Vagina (tissue), 2 donors: ENCODE measurements at regions of chr3 and their contacts with region 1.

Region 1: GRCh38 chr3:190574473-190574872 is 60.6 kb downstream of the IL1RAP start:
- DNase-seq: no peak
- H3K4me3 ChIP-seq: no peak overlapping the region
- H3K27ac ChIP-seq: no peak overlapping the region
- H3K4me1 ChIP-seq: peaks cover 9% of the 10 kb centered on the region
- H3K27me3 ChIP-seq: no peaks in the 10 kb centered on the region
- CTCF ChIP-seq: no peak
- POLR2A ChIP-seq: no peak

Region 2: DNA sequence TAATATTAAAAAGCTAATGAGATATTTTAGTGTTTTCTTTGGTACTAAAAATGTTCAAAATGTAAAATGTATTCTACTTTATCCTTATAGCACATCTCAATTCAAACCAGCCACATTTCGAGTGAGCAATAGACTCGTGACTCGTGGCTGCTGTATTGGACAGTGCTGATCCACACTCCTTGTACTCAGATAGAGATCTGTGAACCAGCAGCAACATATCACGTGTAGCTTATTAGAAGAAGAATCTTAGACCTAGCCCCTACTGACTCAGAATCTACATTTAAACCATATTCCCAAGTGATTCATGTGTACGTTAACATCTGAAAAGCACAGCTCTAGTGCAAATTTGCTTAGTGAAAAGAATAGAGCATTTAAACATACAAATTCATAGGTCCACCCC is 70.3 kb after region 1 on chr3:
- intact Hi-C with region 1: loop called (anchors 5 kb)
- DNase-seq: no peak
- H3K4me3 ChIP-seq: no peak overlapping the region
- H3K27ac ChIP-seq: no peak overlapping the region
- H3K4me1 ChIP-seq: no peaks in the 10 kb centered on the region
- H3K27me3 ChIP-seq: no peaks in the 10 kb centered on the region
- CTCF ChIP-seq: no peak
- POLR2A ChIP-seq: no peak